HCT116 (cell line): ENCODE measurements at regions of chr15 and their contacts with region 1.

Region 1: DNA sequence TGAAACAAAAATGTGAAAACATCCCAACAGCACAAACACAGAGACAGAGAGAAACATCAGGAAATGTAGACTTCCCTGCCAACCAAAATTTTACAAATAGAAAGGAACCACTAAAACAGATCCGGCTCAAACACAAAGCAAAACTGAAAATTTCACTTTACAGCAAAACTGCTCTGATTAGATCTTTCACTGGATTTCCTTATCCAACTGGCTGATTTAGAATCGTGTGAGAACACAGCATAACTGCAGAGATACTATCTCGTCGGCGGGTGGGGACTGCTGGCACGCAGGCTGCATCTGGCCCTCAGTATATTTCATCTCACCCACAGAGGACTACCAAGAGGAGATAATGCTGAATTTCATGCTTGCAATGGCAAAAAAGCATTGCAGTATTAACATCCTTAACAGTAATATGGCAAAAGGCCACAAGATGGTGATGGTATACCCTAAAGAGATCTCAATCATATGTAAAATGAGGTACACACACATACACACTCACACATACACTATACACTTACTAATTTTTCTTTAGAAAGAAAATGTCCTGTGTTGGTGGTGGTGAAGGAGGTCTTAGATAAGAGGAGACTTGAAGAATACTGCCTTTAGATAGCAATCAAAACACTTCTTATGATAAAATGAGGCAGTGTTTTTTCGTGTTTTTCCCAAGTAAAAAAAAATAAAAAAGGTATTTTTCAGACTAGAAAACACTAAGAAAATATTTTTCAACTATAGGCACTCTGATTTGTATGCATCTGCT is 10.6 kb upstream of the LEO1 start:
- DNase-seq: peak; percentile 50
- ATAC-seq: peak; percentile 93
- H3K4me3 ChIP-seq: no peak overlapping the region
- H3K27ac ChIP-seq: no peak overlapping the region
- H3K4me1 ChIP-seq: peaks cover 0 to 11% of the 10 kb centered on the region in 2 experiments; a peak in 2 of 4 replicates
- H3K27me3 ChIP-seq: no peaks in the 10 kb centered on the region
- CTCF ChIP-seq: peak; percentile 44 to 82 (median 76); a peak in 5 of 6 replicates
- POLR2A ChIP-seq: no peak
- RAD21 ChIP-seq: peak; percentile 88

Region 2: GRCh38 chr15:52139599-52140491 is 157.7 kb after region 1 on chr15:
- CTCF ChIA-PET with region 1: interaction called, 3 read pairs
- POLR2A ChIA-PET with region 1: no interaction called
- RAD21 ChIA-PET with region 1: no interaction called
- intact Hi-C with region 1: loop called (anchors 1 kb)
- DNase-seq: peak; percentile 48
- ATAC-seq: peak; percentile 86
- H3K4me3 ChIP-seq: no peak overlapping the region
- H3K27ac ChIP-seq: no peak overlapping the region
- H3K4me1 ChIP-seq: peaks cover 0 to 12% of the 10 kb centered on the region in 2 experiments; a peak in 2 of 4 replicates
- H3K27me3 ChIP-seq: no peaks in the 10 kb centered on the region
- CTCF ChIP-seq: peak; percentile 57 to 97 (median 88); a peak in 5 of 6 replicates
- POLR2A ChIP-seq: no peak
- RAD21 ChIP-seq: peak; percentile 78

Region 3: GRCh38 chr15:52208306-52208946 is 226.2 kb after region 1 on chr15:
- CTCF ChIA-PET with region 1: no interaction called
- POLR2A ChIA-PET with region 1: no interaction called
- RAD21 ChIA-PET with region 1: no interaction called
- intact Hi-C with region 1: loop called (anchors 2 kb)
- DNase-seq: peak; percentile 49
- ATAC-seq: peak; percentile 98
- H3K4me3 ChIP-seq: no peak overlapping the region
- H3K27ac ChIP-seq: no peak overlapping the region
- H3K4me1 ChIP-seq: no peaks in the 10 kb centered on the region
- H3K27me3 ChIP-seq: no peaks in the 10 kb centered on the region
- CTCF ChIP-seq: peak; percentile 56 to 94 (median 92); a peak in 5 of 6 replicates
- POLR2A ChIP-seq: no peak
- RAD21 ChIP-seq: peak; percentile 55; the same call in 1 of the 2 replicates